ENCODE measurements at regions of chr10 and their contacts with region 1.

Region 1: GRCh38 chr10:124604214-124605000 is 139.8 kb downstream of the FAM53B start:
- DNase-seq: no peak
- ATAC-seq: no peak
- H3K4me3 ChIP-seq: no peak overlapping the region
- H3K27ac ChIP-seq: no peak overlapping the region
- H3K4me1 ChIP-seq: no peaks in the 10 kb centered on the region
- H3K27me3 ChIP-seq: peaks cover 3% of the 10 kb centered on the region; the same call in 1 of the 2 replicates
- CTCF ChIP-seq: no peak
- POLR2A ChIP-seq: no peak
- RAD21 ChIP-seq: no peak

Region 2: GRCh38 chr10:123147635-123148413 is 1456.6 kb before region 1 on chr10 and contains the start of gene HMX2:
- CTCF ChIA-PET with region 1: no interaction called
- POLR2A ChIA-PET with region 1: no interaction called
- dilution Hi-C with region 1: no loop called
- in situ Hi-C with region 1: no loop called
- intact Hi-C with region 1: no loop called
- DNase-seq: no peak
- ATAC-seq: no peak
- H3K4me3 ChIP-seq: no peak within 1 kb of the TSS
- H3K27ac ChIP-seq: no peak within 1 kb of the TSS
- H3K4me1 ChIP-seq: no peaks in the 10 kb centered on the region; the same call in 1 of the 2 replicates
- H3K27me3 ChIP-seq: peaks cover 93% of the 10 kb centered on the region
- CTCF ChIP-seq: no peak
- POLR2A ChIP-seq: no peak
- RAD21 ChIP-seq: no peak
- total RNA-seq, gene HMX2: not detected in 2 replicates

Region 3: DNA sequence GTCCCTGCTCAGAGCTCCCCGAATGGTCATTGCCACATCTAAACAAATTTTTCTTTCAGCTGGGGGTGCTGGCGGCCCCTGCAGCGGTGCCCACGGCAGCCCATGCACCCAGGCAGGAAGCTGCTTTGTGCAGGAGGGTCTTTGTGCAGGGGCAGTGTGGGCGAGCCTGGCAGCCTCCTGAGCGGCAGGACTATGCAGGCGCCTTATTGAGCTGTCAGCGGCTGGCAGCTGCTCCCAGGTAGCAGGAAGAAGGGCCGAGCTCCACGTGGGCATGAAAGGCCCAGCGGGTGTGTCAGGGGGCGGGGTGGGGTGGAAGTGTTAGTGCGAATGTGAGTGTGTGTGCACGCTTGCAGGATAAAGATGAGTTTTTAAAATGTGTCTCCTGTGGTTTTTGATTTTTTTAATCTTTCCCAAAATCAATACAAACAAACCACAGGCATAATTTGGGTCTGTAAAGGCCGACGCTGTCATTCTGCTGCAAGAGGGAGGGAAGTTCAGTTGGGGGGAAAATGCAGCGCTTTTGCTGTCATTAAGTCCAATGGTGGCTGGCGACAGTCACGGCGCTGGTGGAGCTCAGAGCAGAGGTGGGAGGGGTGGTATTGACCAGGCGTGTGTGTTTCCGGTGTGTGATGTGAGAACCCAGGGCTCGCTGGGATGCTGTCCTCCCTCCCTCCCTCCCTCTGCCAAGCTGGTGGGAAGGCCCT is 58.9 kb before region 1 on chr10:
- CTCF ChIA-PET with region 1: no interaction called
- POLR2A ChIA-PET with region 1: no interaction called
- dilution Hi-C with region 1: no loop called
- in situ Hi-C with region 1: no loop called
- intact Hi-C with region 1: loop called (anchors 2 kb)
- DNase-seq: no peak
- ATAC-seq: no peak
- H3K4me3 ChIP-seq: no peak overlapping the region
- H3K27ac ChIP-seq: no peak overlapping the region
- H3K4me1 ChIP-seq: no peaks in the 10 kb centered on the region
- H3K27me3 ChIP-seq: peaks cover 4% of the 10 kb centered on the region; the same call in 1 of the 2 replicates
- CTCF ChIP-seq: no peak
- POLR2A ChIP-seq: no peak
- RAD21 ChIP-seq: no peak

Region 4: DNA sequence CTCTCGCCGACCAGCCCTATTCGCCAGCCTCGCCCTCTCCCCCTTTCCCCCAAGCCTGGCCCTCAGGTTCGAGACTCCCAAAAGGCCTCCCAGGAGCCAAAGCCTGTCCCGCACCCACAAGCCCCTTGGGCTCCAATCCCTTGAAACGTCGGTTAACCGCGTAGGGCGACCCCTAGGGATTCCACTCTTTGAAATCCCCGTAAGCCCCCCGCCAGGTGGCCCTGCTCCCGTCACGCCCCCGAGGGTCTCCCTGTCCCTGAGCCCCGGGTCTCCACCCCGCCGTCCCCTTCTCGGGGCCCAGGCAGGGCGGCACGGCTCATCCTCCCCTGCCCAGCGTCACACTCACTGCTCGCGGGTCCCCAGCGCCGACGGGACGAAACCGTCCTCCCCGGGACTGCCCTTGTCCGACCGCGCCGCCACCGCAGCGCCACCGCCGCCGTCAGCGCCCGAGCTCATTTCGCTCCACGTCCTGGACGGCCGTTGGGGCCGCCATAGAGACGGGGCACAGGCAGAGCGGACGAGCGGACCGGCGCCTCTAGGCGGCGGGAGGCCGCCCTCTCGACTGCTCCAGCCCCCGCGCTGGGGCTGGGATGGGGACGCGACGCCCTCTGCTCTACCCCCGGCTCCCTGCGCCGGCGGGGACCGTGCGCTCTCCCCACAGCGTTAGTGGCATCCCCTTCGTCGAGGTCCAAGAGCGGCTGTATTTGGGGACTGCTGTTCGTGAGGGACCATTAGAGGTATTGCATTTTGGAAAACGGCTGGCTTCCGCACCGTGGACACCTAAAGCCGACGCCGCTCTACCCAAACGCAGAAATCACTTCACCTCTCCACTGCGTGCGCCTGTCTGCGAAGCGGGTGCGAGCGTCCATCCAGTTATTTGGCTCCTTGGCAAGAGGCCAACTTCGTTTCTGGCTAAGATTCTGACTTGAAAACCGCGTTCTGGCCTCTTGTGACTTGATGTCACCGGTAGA is 187.3 kb after region 1 on chr10 and contains the start of gene EEF1AKMT2:
- CTCF ChIA-PET with region 1: no interaction called
- POLR2A ChIA-PET with region 1: no interaction called
- dilution Hi-C with region 1: no loop called
- in situ Hi-C with region 1: no loop called
- intact Hi-C with region 1: no loop called
- DNase-seq: peak; percentile 82
- ATAC-seq: peak; percentile 99
- H3K4me3 ChIP-seq: peak within 1 kb of the TSS; percentile 87
- H3K27ac ChIP-seq: peak within 1 kb of the TSS; percentile 84
- H3K4me1 ChIP-seq: no peaks in the 10 kb centered on the region; the same call in 1 of the 2 replicates
- H3K27me3 ChIP-seq: no peaks in the 10 kb centered on the region
- CTCF ChIP-seq: no peak
- POLR2A ChIP-seq: peak; percentile 82; the same call in 1 of the 2 replicates
- RAD21 ChIP-seq: no peak; the same call in 1 of the 2 replicates
- total RNA-seq, gene EEF1AKMT2: 9.7 and 22.8 TPM in 2 replicates

Region 5: DNA sequence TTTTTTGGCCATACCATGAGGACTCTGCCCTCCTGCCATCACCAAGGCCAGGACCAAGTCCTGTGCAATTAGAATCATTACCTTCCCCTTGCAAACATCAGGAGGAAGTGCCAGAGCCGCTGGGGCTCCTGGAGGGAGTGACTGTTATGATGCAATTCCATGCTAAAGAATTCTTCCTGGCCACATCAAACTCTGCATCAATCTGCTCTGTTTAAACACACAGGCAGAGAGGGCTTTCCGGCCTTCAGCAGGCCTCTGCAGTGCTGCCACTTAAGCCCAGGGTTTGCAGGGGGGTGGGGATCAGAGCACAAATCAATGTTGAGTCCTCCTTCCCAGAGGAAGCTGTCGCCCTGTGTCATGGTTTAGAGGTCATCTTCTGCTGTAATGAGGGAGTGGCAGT is 497.8 kb after region 1 on chr10:
- CTCF ChIA-PET with region 1: no interaction called
- POLR2A ChIA-PET with region 1: no interaction called
- dilution Hi-C with region 1: no loop called
- in situ Hi-C with region 1: no loop called
- intact Hi-C with region 1: no loop called
- DNase-seq: peak; percentile 81
- ATAC-seq: peak; percentile 91
- H3K4me3 ChIP-seq: no peak overlapping the region
- H3K27ac ChIP-seq: peak overlapping the region; percentile 8; the same call in 1 of the 2 replicates
- H3K4me1 ChIP-seq: peaks cover 13% of the 10 kb centered on the region
- H3K27me3 ChIP-seq: no peaks in the 10 kb centered on the region
- CTCF ChIP-seq: no peak
- POLR2A ChIP-seq: no peak
- RAD21 ChIP-seq: no peak; the same call in 1 of the 2 replicates

Measured in IMR-90 (cell line).